ENCODE measurements at regions of chr7 and their contacts with region 1.

Region 1: DNA sequence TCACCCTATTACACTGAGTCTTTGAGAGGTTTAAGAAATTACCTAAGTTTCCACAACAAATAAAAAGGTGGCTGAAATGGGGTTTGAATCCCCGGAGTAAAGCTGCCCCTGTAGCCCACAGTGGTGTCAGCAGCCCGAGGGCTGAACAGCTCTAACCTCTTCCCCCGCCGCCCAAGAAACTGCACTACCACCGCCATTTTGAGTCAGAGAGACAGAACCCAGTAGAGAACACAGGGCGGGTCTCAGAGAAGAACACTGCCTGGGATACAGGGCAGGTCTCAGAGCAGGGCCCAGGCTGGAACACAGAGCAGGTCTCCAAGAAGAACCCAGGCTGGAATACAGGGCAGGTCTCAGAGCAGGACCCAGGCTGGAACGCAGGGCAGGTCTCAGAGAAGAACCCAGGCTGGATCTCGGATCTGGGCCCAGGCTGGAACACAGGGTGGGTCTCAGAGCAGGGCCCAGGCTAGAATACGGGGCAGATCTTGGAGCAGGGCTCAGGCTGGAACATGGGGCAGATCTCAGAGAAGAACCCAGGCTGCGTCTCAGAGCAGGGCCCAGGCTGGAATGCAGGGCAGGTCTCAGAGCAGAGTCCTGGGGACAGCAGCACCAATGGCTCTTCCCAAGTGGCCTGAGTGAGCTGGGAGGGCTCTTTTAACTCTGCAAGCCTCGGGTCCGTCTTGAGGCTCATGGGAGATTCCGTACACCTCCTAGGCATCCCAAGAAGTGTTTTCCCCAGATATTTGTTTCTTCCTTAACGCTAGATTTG is 85.9 kb upstream of the LANCL2 start:
- DNase-seq: no peak
- ATAC-seq: no peak
- H3K4me3 ChIP-seq: no peak overlapping the region
- H3K27ac ChIP-seq: no peak overlapping the region
- H3K4me1 ChIP-seq: no peaks in the 10 kb centered on the region
- H3K27me3 ChIP-seq: no peaks in the 10 kb centered on the region
- CTCF ChIP-seq: no peak

Region 2: GRCh38 chr7:55415173-55415778 is 136.0 kb after region 1 on chr7:
- intact Hi-C with region 1: loop called (anchors 5 to 10 kb)
- DNase-seq: peak; percentile 66 to 90 (median 79)
- ATAC-seq: peak; percentile 82 to 98 (median 96)
- H3K4me3 ChIP-seq: no peak overlapping the region
- H3K27ac ChIP-seq: no peak overlapping the region
- H3K4me1 ChIP-seq: no peaks in the 10 kb centered on the region
- H3K27me3 ChIP-seq: no peaks in the 10 kb centered on the region
- CTCF ChIP-seq: peak; percentile 52 to 81 (median 71)

Region 3: DNA sequence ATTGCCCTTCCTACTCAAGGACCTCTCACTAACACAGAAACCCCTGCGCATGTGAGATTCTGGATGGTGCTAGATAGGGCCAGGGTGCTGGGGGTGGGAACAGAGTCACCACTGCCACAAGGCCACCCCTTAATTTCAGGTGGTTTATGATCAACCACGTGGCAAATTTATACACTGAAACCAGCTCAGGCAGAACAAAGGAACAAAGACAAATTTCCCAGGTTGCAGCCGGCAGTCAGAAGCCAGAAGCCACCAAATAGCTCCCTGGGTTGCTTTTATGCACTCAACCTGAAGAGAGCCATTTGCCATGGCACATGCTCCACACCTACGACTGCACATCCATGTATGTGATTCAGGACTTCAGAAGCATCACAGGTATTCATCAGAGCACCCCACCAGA is 290.5 kb after region 1 on chr7:
- intact Hi-C with region 1: no loop called
- DNase-seq: no peak
- ATAC-seq: no peak
- H3K4me3 ChIP-seq: no peak overlapping the region
- H3K27ac ChIP-seq: peak overlapping the region in 1 of 4 donors; percentile 22
- H3K4me1 ChIP-seq: peaks cover 0 to 19% (median 0%) of the 10 kb centered on the region in 3 donors
- H3K27me3 ChIP-seq: no peaks in the 10 kb centered on the region
- CTCF ChIP-seq: no peak